Activated CD4-positive, alpha-beta T cell treated with anti-CD3 and anti-CD28 coated beads for 36 hours (primary cell): ENCODE measurements at regions of chr15 and their contacts with region 1.

Region 1: GRCh38 chr15:90143166-90143655 is 40.9 kb upstream of the IDH2 start:
- DNase-seq: peak; percentile 90
- ATAC-seq: peak; percentile 92
- H3K4me3 Mint-ChIP-seq: peak overlapping the region; percentile 20
- H3K27ac Mint-ChIP-seq: peak overlapping the region; percentile 83
- H3K4me1 Mint-ChIP-seq: peaks cover 38% of the 10 kb centered on the region
- H3K27me3 Mint-ChIP-seq: no peaks in the 10 kb centered on the region

Region 2: DNA sequence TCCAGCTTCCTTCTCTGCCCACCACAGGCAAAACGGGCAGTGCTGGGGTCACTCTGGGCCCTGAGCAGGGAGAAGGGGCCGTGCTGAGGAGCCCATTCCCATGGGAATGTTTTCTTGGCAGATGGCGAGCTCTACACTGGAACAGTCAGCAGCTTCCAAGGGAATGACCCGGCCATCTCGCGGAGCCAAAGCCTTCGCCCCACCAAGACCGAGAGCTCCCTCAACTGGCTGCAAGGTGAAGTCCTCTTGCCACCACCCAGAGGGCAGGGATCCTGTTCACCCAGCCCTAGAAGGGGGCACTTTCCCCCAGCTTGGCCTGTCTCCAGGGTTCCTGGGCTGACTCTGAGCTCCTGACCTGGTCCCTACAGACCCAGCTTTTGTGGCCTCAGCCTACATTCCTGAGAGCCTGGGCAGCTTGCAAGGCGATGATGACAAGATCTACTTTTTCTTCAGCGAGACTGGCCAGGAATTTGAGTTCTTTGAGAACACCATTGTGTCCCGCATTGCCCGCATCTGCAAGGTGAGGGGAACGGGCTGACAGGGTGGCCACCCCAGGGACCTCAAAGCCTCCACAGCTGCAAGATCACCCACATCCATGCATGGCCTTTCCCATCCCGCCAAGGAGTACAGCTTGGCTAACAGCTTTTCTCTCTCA is 78.2 kb after region 1 on chr15:
- CTCF ChIA-PET with region 1: interaction called, 11 read pairs
- POLR2A ChIA-PET with region 1: no interaction called
- intact Hi-C with region 1: loop called in 1 of 2 experiments (anchors 1 kb)
- DNase-seq: peak; percentile 63
- ATAC-seq: peak; percentile 60
- H3K4me3 Mint-ChIP-seq: no peak overlapping the region
- H3K27ac Mint-ChIP-seq: no peak overlapping the region
- H3K4me1 Mint-ChIP-seq: no peaks in the 10 kb centered on the region
- H3K27me3 Mint-ChIP-seq: no peaks in the 10 kb centered on the region

Region 3: GRCh38 chr15:90265271-90266060 is 122.3 kb after region 1 on chr15 and contains the start of gene NGRN:
- CTCF ChIA-PET with region 1: interaction called, 3 read pairs
- POLR2A ChIA-PET with region 1: no interaction called
- intact Hi-C with region 1: loop called in 1 of 2 experiments (anchors 1 kb)
- DNase-seq: peak; percentile 95
- ATAC-seq: peak; percentile 87
- H3K4me3 Mint-ChIP-seq: peak within 1 kb of the TSS; percentile 98
- H3K27ac Mint-ChIP-seq: peak within 1 kb of the TSS; percentile 99
- H3K4me1 Mint-ChIP-seq: peaks cover 37% of the 10 kb centered on the region
- H3K27me3 Mint-ChIP-seq: no peaks in the 10 kb centered on the region
- total RNA-seq, gene NGRN: 22.0 to 23.9 TPM

Region 4: GRCh38 chr15:90286678-90287077 is 143.5 kb after region 1 on chr15:
- CTCF ChIA-PET with region 1: interaction called, 3 read pairs
- POLR2A ChIA-PET with region 1: no interaction called
- intact Hi-C with region 1: loop called (anchors 1 to 5 kb)
- DNase-seq: peak; percentile 61
- ATAC-seq: peak; percentile 83
- H3K4me3 Mint-ChIP-seq: no peak overlapping the region
- H3K27ac Mint-ChIP-seq: no peak overlapping the region
- H3K4me1 Mint-ChIP-seq: no peaks in the 10 kb centered on the region
- H3K27me3 Mint-ChIP-seq: no peaks in the 10 kb centered on the region

Region 5: GRCh38 chr15:90291679-90292356 is 148.6 kb after region 1 on chr15:
- CTCF ChIA-PET with region 1: interaction called, 12 read pairs
- POLR2A ChIA-PET with region 1: no interaction called
- intact Hi-C with region 1: loop called in 1 of 2 experiments (anchors 5 kb)
- DNase-seq: peak; percentile 45
- ATAC-seq: no peak
- H3K4me3 Mint-ChIP-seq: no peak overlapping the region
- H3K27ac Mint-ChIP-seq: no peak overlapping the region
- H3K4me1 Mint-ChIP-seq: no peaks in the 10 kb centered on the region
- H3K27me3 Mint-ChIP-seq: no peaks in the 10 kb centered on the region

Region 6: GRCh38 chr15:90482124-90483011 is 339.2 kb after region 1 on chr15:
- CTCF ChIA-PET with region 1: no interaction called
- POLR2A ChIA-PET with region 1: no interaction called
- intact Hi-C with region 1: loop called in 1 of 2 experiments (anchors 5 kb)
- DNase-seq: peak; percentile 64
- ATAC-seq: no peak
- H3K4me3 Mint-ChIP-seq: no peak overlapping the region
- H3K27ac Mint-ChIP-seq: peak overlapping the region; percentile 14
- H3K4me1 Mint-ChIP-seq: peaks cover 18% of the 10 kb centered on the region
- H3K27me3 Mint-ChIP-seq: no peaks in the 10 kb centered on the region